ENCODE measurements at regions of chr20 and their contacts with region 1.

Region 1: GRCh38 chr20:45934586-45935415 is at the start of gene PCIF1:
- DNase-seq: peak; percentile 97
- H3K4me3 Mint-ChIP-seq: peak within 1 kb of the TSS; percentile 94
- H3K27ac Mint-ChIP-seq: peak within 1 kb of the TSS; percentile 92
- H3K4me1 Mint-ChIP-seq: no peaks in the 10 kb centered on the region
- H3K27me3 Mint-ChIP-seq: no peaks in the 10 kb centered on the region
- CTCF ChIP-seq: no peak
- total RNA-seq, gene PCIF1: 14.3 and 20.5 TPM in 2 replicates

Region 2: GRCh38 chr20:45798935-45799642 is 135.7 kb before region 1 on chr20:
- CTCF ChIA-PET with region 1: interaction called, 10 read pairs
- POLR2A ChIA-PET with region 1: interaction called, 6 read pairs
- intact Hi-C with region 1: loop called (anchors 10 kb)
- DNase-seq: peak; percentile 71
- H3K4me3 Mint-ChIP-seq: no peak overlapping the region
- H3K27ac Mint-ChIP-seq: peak overlapping the region; percentile 40
- H3K4me1 Mint-ChIP-seq: peaks cover 6% of the 10 kb centered on the region
- H3K27me3 Mint-ChIP-seq: no peaks in the 10 kb centered on the region
- CTCF ChIP-seq: peak; percentile 74

Region 3: GRCh38 chr20:45857114-45857881 is 77.5 kb before region 1 on chr20 and contains the starts of genes ACOT8 and ZSWIM3:
- CTCF ChIA-PET with region 1: interaction called, 3 read pairs
- POLR2A ChIA-PET with region 1: interaction called, 23 read pairs
- intact Hi-C with region 1: loop called (anchors 2 kb)
- DNase-seq: peak; percentile 100
- H3K4me3 Mint-ChIP-seq: peak within 1 kb of the TSS; percentile 92
- H3K27ac Mint-ChIP-seq: peak within 1 kb of the TSS; percentile 92
- H3K4me1 Mint-ChIP-seq: peaks cover 16% of the 10 kb centered on the region
- H3K27me3 Mint-ChIP-seq: no peaks in the 10 kb centered on the region
- CTCF ChIP-seq: no peak
- total RNA-seq, gene ACOT8: 19.5 and 20.1 TPM in 2 replicates
- total RNA-seq, gene ZSWIM3: 1.4 and 2.4 TPM in 2 replicates

Region 4: GRCh38 chr20:45890985-45891983 is 43.5 kb before region 1 on chr20 and contains the starts of genes CTSA and NEURL2:
- CTCF ChIA-PET with region 1: interaction called, 5 read pairs
- POLR2A ChIA-PET with region 1: interaction called, 58 read pairs
- intact Hi-C with region 1: loop called (anchors 2 kb)
- DNase-seq: peak; percentile 89
- H3K4me3 Mint-ChIP-seq: peak within 1 kb of the TSS; percentile 95
- H3K27ac Mint-ChIP-seq: peak within 1 kb of the TSS; percentile 86
- H3K4me1 Mint-ChIP-seq: peaks cover 6% of the 10 kb centered on the region
- H3K27me3 Mint-ChIP-seq: no peaks in the 10 kb centered on the region
- CTCF ChIP-seq: no peak
- total RNA-seq, gene CTSA: 25.3 and 39.1 TPM in 2 replicates
- total RNA-seq, gene NEURL2: 2.0 and 2.5 TPM in 2 replicates

Region 5: GRCh38 chr20:45924391-45925261 is 10.2 kb before region 1 on chr20:
- CTCF ChIA-PET with region 1: interaction called, 7 read pairs
- POLR2A ChIA-PET with region 1: interaction called, 49 read pairs
- intact Hi-C with region 1: no loop called
- DNase-seq: no peak
- H3K4me3 Mint-ChIP-seq: no peak overlapping the region
- H3K27ac Mint-ChIP-seq: peak overlapping the region; percentile 63
- H3K4me1 Mint-ChIP-seq: peaks cover 11% of the 10 kb centered on the region
- H3K27me3 Mint-ChIP-seq: peaks cover 20% of the 10 kb centered on the region
- CTCF ChIP-seq: no peak

Region 6: DNA sequence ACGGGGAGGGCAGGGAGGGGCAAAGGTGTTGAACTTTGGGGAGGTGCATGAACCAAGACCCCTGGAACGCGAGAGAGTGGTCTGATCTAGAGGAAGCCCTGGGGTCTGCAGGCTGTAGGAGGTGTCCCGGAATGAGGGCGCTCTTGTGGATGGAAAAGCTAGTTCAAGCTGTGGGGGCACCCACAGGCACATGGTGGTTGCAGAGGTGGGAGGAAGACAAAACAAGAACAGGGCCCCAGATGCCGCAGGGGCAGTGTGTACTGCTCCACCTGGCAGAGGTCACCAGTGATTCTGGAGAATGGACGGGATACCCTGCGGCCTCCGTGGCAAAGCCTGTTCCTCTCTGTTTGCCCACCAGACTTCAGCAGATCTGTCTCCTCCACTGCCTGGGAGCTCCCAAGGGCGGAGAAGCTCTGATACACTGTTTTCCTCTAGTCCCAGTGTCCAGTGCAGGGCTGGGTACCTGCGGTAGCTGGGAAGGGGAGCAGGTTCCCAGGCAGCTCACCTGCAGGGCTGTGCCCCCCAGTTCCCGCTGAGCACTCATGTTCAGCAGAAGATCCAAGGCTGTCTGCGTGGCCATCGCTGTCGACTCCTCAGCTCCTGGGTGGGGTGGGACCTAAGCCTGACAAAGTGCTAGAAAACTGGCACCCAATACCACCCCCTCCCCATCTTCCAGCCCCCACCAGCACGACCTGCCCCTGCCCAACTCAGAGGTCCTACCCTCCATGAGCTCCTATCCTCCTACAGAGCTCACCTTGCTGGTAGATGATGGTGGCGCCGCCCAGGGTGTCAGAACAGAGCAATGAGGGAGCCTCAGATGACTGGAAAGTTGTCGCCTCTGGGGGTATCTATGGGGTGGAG is 22.5 kb after region 1 on chr20:
- CTCF ChIA-PET with region 1: interaction called, 6 read pairs
- POLR2A ChIA-PET with region 1: interaction called, 21 read pairs
- intact Hi-C with region 1: loop called (anchors 2 kb)
- DNase-seq: no peak
- H3K4me3 Mint-ChIP-seq: no peak overlapping the region
- H3K27ac Mint-ChIP-seq: no peak overlapping the region
- H3K4me1 Mint-ChIP-seq: no peaks in the 10 kb centered on the region
- H3K27me3 Mint-ChIP-seq: no peaks in the 10 kb centered on the region
- CTCF ChIP-seq: no peak

Region 7: DNA sequence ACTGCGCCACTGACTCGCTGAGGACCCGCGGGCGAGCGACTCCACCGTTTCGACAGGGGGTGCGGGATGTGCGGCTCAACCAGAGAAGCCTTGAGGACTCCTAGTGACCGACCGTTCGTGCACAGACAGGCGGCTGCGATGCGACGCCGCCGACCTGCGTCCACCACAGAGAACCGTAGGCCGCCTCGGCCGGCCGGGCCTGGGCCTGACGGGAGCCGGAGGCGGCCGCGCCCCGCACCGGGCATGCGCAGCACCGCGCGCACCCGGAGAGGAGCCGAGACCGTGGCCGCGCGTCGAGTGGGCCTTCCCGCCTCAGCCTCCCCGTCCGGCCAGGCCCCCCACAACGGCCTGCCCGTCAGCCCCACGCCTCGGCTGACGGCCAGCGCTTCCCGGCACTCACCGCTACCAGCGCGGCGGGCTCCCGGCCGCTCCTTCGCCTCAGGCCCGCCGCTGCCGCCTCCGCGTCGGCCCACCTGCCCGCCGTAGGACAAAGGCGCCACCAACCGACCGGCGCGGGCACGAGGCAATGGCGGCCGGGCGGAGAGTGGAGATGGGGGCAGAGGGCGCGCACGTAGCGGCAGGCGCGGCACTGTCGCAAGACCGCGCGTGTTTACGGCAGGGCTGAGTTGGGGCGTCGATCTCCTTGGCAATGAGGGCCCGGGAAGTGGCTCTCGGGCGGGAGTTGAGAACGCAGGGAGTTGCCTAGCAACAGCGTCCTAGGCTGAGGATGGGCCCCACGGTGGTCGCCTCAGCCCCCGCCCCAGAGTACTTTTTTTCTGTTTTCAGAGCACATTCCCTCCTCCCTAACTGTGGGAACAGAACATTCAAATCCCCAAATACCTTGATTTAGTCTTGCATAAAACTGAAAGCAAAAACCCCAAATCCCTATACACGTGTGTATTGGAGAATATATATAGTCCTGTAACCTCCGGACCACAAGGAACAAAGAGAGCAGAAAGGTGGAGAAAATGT is 154.9 kb after region 1 on chr20 and contains the start of gene NCOA5:
- CTCF ChIA-PET with region 1: no interaction called
- POLR2A ChIA-PET with region 1: interaction called, 20 read pairs
- intact Hi-C with region 1: no loop called
- DNase-seq: peak; percentile 93
- H3K4me3 Mint-ChIP-seq: peak within 1 kb of the TSS; percentile 84
- H3K27ac Mint-ChIP-seq: peak within 1 kb of the TSS; percentile 85
- H3K4me1 Mint-ChIP-seq: peaks cover 28% of the 10 kb centered on the region
- H3K27me3 Mint-ChIP-seq: no peaks in the 10 kb centered on the region
- CTCF ChIP-seq: no peak
- total RNA-seq, gene NCOA5: 26.0 and 31.2 TPM in 2 replicates

Measured in MCF 10A (cell line).